Motor neuron (in vitro differentiated cells): ENCODE measurements at regions of chr11 and their contacts with region 1.

Region 1: DNA sequence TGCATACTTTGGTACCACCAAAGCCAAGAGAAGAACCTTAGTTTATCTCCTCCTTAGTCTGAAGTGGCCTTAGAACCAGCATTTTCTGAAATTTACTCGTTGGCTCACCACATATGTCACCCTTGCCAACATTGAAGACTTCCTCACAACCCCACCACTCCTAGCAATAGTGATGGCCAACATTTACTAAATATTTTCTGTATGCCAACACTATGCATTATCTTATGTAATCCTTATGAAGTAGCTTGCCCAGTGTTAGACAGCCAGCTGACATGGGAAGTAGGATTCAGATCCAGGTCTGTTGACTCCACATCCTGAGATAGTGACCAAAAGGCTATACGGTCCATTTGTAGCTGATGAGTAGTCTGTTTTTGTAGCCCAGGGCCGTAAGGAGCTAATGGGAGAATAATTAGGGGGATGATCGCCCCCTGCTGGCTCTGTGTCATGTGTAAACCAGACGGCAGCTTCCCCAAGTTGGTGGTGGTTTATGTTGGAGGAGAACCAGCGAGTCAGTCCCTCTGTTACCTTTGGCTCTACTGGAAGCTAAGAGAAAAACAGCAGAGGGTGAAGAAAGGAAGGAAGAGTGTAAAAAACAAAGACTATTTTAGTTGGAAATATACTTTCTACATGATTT is 120.5 kb upstream of the RASSF10 start:
- ATAC-seq: peak; percentile 67 to 90 (median 76)
- H3K4me3 ChIP-seq: no peak overlapping the region
- H3K27ac ChIP-seq: no peak overlapping the region
- H3K4me1 ChIP-seq: peaks cover 0 to 2% of the 10 kb centered on the region in 2 donors

Region 2: GRCh38 chr11:12331239-12331874 is 557.3 kb before region 1 on chr11:
- in situ Hi-C with region 1: loop called in 5 of 9 experiments (anchors 25 kb)
- ATAC-seq: peak; percentile 81 to 93 (median 85)
- H3K4me3 ChIP-seq: no peak overlapping the region
- H3K27ac ChIP-seq: no peak overlapping the region
- H3K4me1 ChIP-seq: peaks cover 11 to 14% of the 10 kb centered on the region in 2 donors

Region 3: DNA sequence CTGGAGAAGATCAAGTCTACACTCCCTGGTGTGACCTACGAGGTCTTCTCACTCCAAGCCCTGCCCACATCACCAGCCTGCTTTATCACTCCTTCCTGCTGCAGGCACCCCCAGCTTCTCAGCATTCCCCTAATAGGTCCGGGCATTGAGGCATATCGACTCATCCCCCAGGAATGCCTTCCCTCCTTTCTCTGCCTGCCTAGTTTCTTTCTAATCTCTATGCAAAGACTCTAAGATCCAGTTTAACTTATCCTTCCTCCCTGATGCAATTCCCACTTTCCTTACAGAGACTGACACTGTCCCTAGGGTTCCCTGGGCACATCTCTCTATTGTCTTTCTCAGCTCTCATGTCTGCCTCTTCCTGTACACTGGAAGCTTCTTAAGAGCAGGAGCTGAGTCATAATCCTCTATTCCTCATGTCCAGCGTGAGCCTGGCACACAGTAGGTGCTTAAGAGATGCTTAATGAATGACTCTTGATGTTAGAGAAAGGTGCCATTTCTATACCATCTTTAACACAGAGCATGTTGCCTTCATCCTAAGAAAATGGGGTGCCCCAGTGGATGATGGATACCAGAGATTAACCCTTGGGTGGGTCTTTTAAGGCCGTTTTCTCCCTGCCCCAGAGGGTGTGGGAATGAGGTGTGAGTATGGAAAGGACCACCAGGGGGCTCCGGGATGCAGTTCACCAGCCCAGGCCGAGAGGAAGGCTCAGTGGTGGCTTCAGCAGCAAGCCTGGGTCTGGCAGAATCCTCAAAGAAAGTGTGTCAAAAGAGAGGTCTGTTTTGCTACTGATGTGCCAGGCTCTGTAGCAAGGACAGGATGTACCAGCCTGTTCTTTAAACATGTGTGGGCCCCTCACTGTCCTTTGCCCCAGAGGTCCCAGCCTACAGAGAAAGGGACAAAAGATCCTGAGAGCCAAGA is 476.6 kb before region 1 on chr11:
- in situ Hi-C with region 1: loop called in 3 of 9 experiments (anchors 25 kb)
- ATAC-seq: peak; percentile 82 to 96 (median 92)
- H3K4me3 ChIP-seq: no peak overlapping the region
- H3K27ac ChIP-seq: no peak overlapping the region
- H3K4me1 ChIP-seq: peaks cover 19 to 20% of the 10 kb centered on the region in 2 donors

Region 4: GRCh38 chr11:12508151-12508751 is 380.4 kb before region 1 on chr11:
- in situ Hi-C with region 1: loop called in 1 of 9 experiments (anchors 25 kb)
- ATAC-seq: peak in 3 of 8 experiments; percentile 76 to 77 (median 77)
- H3K4me3 ChIP-seq: no peak overlapping the region
- H3K27ac ChIP-seq: no peak overlapping the region
- H3K4me1 ChIP-seq: no peaks in the 10 kb centered on the region

Region 5: DNA sequence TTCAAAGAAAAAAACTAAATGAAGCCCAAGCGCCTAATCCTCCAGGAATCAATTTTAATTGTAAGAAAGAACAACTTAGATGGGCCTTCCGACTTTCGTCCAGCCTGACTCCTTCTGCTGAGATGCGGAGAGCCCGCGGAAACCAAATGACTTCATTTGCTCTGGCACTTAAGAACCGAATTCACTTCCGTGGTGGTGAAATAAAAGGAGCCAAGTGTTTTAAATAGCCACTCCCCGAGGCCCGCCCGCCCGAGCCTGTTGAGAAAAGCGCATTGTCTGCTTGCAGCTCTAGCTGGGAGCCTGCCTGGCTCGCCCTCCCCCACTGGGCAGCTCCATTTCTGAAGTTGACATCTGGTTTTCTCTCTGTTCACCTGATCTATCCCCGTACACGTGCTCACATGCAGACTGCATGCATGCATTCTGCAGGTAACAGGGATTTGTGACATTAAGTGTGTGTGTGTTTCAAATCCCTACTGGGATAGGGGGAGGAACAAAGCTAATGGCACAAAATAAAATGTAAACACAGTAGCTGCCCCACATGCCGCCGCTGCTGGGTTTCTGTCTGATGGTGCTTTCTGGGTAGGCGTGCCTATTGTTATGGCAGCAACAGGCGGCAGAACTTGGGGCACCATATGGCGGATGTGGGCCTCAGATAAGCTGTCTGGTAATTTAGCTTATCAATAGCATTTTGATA is 208.2 kb before region 1 on chr11:
- in situ Hi-C with region 1: loop called in 3 of 9 experiments (anchors 25 kb)
- ATAC-seq: peak; percentile 73 to 92 (median 90)
- H3K4me3 ChIP-seq: peak overlapping the region in 4 of 5 donors; percentile 12 to 17 (median 16)
- H3K27ac ChIP-seq: no peak overlapping the region
- H3K4me1 ChIP-seq: peaks cover 54 to 61% of the 10 kb centered on the region in 2 donors